Mammary epithelial cell (primary cell): ENCODE measurements at regions of chr3 and their contacts with region 1.

Region 1: DNA sequence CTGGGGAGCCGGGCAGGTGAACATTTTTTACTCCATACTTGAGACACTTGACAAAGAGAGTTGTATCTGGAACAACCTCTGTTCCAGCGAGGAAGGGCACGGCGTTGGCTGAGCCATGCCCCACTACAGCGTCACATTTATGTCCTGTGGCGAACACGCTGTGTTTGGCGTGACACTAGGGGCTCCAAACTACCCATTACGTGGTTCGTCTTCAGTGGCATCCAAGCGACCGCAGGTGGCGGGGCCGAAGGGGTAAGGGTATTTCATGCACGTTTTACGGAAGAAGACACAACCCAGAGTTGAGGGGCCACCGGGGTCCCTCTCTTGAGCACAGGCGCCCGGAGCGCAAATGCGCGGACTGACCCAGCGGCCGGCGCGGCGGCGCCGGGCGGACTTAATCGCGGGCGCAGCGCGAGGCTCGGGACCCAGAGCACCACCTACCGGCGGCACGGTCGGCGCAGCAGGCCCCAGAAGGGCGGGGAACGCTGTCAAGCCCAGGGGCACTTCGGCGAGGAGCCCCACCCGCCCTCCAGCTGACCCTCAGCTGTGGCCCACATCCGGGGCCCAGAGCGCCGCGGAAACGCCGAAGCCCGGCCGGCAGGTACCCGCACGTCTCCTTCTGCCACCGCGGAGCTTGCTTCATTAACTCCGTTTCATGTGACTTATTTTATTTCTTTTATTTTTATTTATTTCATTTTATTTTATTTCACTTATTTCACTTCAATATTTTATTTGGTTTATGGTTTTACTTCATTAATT is 36.4 kb upstream of the TRIM71 start:
- DNase-seq: peak; percentile 72
- H3K4me3 ChIP-seq: peak overlapping the region; percentile 54 to 64 (median 59)
- H3K27ac ChIP-seq: no peak overlapping the region
- H3K4me1 ChIP-seq: peaks cover 9% of the 10 kb centered on the region
- H3K27me3 ChIP-seq: no peaks in the 10 kb centered on the region
- CTCF ChIP-seq: peak; percentile 45 to 83

Region 2: DNA sequence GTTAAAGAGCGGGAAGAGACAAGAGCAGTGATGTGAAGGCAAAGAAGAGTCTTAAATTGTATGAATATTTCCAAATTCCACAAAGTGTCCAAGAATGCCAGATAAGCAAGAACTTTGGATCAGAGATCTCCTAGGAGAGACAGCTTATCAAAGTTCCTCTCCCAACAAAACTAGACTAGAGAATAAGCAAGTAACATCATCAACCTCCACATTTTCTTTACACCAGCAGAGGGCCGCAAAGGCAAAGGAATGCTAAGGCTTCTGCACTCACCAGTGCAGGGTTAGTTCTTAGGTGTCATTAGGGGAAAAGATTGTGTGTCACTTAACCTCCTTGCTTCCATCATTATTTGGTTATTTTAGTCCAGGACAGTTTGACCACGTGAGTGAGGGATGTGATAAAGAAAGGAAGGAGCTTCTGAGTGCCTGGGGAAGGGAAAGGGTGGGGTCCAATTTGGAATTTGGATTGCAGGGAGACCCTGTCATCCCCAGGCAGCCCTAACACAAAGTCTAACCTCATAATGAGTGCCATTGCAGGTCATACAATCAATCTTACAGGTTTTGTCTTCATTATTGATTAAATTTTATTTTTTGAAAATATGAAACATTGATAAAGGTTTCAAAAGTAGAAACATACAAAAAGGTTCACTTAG is 271.2 kb before region 1 on chr3:
- CTCF ChIA-PET with region 1: no interaction called
- dilution Hi-C with region 1: no loop called
- in situ Hi-C with region 1: no loop called
- intact Hi-C with region 1: loop called (anchors 5 kb)
- DNase-seq: peak; percentile 52
- H3K4me3 ChIP-seq: no peak overlapping the region
- H3K27ac ChIP-seq: no peak overlapping the region
- H3K4me1 ChIP-seq: no peaks in the 10 kb centered on the region
- H3K27me3 ChIP-seq: no peaks in the 10 kb centered on the region
- CTCF ChIP-seq: peak; percentile 63 to 79

Region 3: DNA sequence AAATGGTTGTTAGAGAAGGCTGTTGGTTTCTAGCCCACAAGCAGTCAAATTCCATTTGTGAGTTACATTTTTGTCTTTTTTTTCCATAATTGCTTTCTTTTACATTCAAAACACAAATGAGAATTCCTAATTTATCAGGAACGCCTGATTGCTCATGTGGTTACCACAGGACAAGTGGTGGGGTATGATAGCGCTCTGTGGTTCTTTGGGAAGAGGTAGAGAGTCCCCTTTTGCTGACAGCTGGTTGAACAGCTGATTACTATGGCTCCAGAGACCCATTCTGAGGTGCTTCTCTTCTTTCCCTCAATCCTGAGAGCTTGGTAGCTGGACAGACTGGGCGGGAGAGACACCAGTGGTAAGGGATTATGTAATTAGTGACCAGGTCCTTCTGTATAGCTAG is 72.0 kb before region 1 on chr3:
- CTCF ChIA-PET with region 1: interaction called, 13 read pairs
- dilution Hi-C with region 1: no loop called
- in situ Hi-C with region 1: no loop called
- intact Hi-C with region 1: no loop called
- DNase-seq: no peak
- H3K4me3 ChIP-seq: no peak overlapping the region
- H3K27ac ChIP-seq: no peak overlapping the region
- H3K4me1 ChIP-seq: no peaks in the 10 kb centered on the region
- H3K27me3 ChIP-seq: no peaks in the 10 kb centered on the region
- CTCF ChIP-seq: no peak

Region 4: GRCh38 chr3:32733631-32734229 is 47.7 kb before region 1 on chr3:
- CTCF ChIA-PET with region 1: no interaction called
- dilution Hi-C with region 1: no loop called
- in situ Hi-C with region 1: no loop called
- intact Hi-C with region 1: loop called (anchors 5 kb)
- DNase-seq: no peak
- H3K4me3 ChIP-seq: no peak overlapping the region
- H3K27ac ChIP-seq: no peak overlapping the region
- H3K4me1 ChIP-seq: no peaks in the 10 kb centered on the region
- H3K27me3 ChIP-seq: no peaks in the 10 kb centered on the region
- CTCF ChIP-seq: peak; percentile 55 to 63

Region 5: GRCh38 chr3:32872487-32873382 is 91.3 kb after region 1 on chr3:
- CTCF ChIA-PET with region 1: no interaction called
- dilution Hi-C with region 1: no loop called
- in situ Hi-C with region 1: no loop called
- intact Hi-C with region 1: loop called (anchors 10 kb)
- DNase-seq: no peak
- H3K4me3 ChIP-seq: no peak overlapping the region
- H3K27ac ChIP-seq: no peak overlapping the region
- H3K4me1 ChIP-seq: peaks cover 10% of the 10 kb centered on the region
- H3K27me3 ChIP-seq: no peaks in the 10 kb centered on the region
- CTCF ChIP-seq: no peak

Region 6: DNA sequence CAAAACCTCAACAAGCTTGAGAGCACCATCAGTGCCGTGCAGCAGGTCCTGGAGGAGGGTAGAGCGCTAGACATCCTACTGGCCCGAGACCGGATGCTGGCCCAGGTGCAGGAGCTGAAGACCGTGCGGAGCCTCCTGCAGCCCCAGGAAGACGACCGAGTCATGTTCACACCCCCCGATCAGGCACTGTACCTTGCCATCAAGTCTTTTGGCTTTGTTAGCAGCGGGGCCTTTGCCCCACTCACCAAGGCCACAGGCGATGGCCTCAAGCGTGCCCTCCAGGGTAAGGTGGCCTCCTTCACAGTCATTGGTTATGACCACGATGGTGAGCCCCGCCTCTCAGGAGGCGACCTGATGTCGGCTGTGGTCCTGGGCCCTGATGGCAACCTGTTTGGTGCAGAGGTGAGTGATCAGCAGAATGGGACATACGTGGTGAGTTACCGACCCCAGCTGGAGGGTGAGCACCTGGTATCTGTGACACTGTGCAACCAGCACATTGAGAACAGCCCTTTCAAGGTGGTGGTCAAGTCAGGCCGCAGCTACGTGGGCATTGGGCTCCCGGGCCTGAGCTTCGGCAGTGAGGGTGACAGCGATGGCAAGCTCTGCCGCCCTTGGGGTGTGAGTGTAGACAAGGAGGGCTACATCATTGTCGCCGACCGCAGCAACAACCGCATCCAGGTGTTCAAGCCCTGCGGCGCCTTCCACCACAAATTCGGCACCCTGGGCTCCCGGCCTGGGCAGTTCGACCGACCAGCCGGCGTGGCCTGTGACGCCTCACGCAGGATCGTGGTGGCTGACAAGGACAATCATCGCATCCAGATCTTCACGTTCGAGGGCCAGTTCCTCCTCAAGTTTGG is 109.3 kb after region 1 on chr3:
- CTCF ChIA-PET with region 1: no interaction called
- dilution Hi-C with region 1: loop called (anchors 5 kb)
- in situ Hi-C with region 1: no loop called
- intact Hi-C with region 1: no loop called
- DNase-seq: no peak
- H3K4me3 ChIP-seq: no peak overlapping the region
- H3K27ac ChIP-seq: no peak overlapping the region
- H3K4me1 ChIP-seq: no peaks in the 10 kb centered on the region
- H3K27me3 ChIP-seq: peaks cover 3% of the 10 kb centered on the region
- CTCF ChIP-seq: no peak

Region 7: GRCh38 chr3:32934150-32934742 is 152.9 kb after region 1 on chr3:
- CTCF ChIA-PET with region 1: no interaction called
- dilution Hi-C with region 1: no loop called
- in situ Hi-C with region 1: no loop called
- intact Hi-C with region 1: loop called (anchors 1 kb)
- DNase-seq: no peak
- H3K4me3 ChIP-seq: no peak overlapping the region
- H3K27ac ChIP-seq: no peak overlapping the region
- H3K4me1 ChIP-seq: no peaks in the 10 kb centered on the region
- H3K27me3 ChIP-seq: no peaks in the 10 kb centered on the region
- CTCF ChIP-seq: peak; percentile 68 to 76